ENCODE measurements at regions of chr9 and their contacts with region 1.

Region 1: DNA sequence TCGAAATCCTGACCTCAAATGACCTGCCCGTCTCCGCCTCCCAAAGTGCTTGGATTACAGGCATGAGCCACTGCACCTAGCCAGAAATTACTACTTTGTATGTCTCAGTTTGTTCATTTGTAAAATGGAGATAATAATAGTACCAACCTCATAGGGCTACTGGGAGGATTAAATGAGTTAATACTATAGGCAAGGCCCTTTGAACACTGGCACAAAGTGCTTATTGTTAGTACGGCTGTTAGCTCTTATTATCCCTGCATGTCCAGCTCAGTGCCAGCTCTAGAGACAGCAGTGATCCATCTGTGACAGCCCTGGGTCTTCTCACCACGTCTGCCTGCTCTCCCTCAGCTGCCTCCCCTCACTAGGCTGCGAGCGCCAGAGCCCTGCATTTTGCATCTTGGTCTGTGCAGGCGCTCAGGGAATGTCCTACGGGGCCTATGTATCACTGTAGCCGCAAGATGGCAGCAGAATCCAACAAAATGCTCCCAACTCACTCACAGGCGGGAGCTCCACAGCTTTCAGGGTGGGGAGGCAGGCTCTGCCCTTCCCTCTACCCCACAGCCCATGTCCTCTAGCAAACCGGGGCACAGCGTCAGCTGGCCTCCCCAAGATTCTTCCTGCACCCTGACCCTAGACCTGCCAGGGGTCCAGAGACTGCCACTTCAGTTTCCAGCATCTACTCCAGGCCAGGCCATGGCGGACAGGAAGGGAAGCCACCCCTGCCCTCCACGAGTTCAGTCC is 17.7 kb upstream of the AKNA start:
- DNase-seq: peak; percentile 78 to 90
- ATAC-seq: peak; percentile 87 to 98
- H3K4me3 ChIP-seq: no peak overlapping the region
- H3K27ac ChIP-seq: no peak overlapping the region
- H3K4me1 ChIP-seq: no peaks in the 10 kb centered on the region
- CTCF ChIP-seq: peak; percentile 84
- EP300 ChIP-seq: no peak
- POLR2A ChIP-seq: no peak
- RAD21 ChIP-seq: peak; percentile 93 to 95

Region 2: DNA sequence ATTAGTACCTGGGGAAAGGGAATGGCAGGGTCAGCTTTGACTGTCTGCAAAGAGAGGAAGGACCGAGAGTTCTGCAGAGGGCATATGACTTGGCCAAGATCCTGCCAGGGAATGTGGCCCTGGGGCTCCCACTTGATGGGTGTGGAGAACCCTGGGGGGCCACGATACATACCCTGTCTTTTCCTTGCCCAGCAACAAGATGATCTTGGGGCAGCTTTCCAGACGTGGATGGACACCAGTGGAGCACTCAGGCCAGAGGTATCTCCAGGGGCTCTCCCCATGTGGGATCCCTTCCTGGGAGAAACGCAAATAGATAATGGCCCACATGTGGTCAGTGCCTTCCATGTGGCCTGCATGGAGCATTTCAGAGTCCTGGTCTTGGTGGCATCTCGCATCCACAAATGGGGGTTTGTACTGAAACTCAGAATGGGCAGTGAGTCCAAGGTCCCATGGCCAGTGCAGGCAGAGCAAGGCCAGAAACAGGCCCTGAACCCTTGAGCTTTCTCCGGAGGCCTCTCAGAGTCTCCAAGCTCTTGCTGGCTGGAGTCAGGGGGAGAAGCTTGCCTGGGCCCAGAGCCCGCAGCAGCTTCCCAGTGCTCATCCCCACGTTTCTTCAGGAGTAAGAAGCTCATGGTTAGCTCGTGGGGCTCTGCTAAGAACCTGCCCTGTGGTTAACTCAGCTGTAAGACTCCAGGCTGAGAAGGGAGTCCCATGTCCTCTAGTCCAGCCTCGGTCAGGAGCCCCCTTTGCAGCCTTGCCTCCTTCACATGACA is 100.9 kb before region 1 on chr9:
- CTCF ChIA-PET with region 1: no interaction called
- POLR2A ChIA-PET with region 1: no interaction called
- DNase-seq: no peak
- ATAC-seq: no peak
- H3K4me3 ChIP-seq: no peak overlapping the region
- H3K27ac ChIP-seq: no peak overlapping the region
- H3K4me1 ChIP-seq: no peaks in the 10 kb centered on the region
- CTCF ChIP-seq: no peak
- EP300 ChIP-seq: no peak
- POLR2A ChIP-seq: no peak
- RAD21 ChIP-seq: no peak

Region 3: DNA sequence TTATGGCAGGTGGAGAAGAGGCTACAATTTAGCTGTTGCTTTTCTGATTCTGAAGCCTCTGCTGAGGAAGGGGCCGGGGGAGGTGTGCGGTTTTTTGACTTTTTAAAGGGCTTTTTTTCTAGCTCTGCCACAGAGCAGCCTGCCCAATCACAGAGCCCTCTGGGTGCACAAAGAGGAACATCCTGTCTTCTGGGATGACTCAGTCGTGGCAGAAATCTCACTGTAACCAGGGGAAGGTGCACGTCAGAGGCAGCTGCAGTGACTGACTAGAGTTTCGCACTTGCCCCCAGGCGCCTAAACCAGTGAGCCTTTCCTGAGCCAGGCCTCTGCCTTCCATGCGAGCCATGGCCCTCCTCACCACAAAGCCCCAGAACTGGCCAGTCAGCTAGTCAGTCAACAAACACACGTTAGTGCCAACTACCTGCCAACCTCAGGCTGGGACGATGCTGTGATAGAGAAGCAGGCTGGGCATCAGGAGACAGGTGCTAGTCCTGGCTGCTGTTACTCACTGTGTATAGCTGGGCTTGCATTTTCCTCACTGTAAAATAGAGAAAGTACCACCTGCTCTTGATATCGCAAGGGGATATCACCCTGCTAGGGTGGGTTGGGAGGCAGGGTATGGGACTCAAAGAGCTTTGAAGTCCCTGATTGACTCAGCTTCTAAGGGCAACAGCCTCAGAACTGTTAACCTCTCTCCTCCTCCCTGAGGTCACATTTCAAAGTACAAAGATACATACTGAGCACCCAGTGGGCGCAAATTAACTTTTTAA is 19.9 kb before region 1 on chr9:
- CTCF ChIA-PET with region 1: interaction called, 20 read pairs
- POLR2A ChIA-PET with region 1: no interaction called
- DNase-seq: peak in 1 of 2 experiments; percentile 24
- ATAC-seq: peak; percentile 70 to 73; a peak in 5 of 6 replicates
- H3K4me3 ChIP-seq: no peak overlapping the region
- H3K27ac ChIP-seq: peak overlapping the region; percentile 25 to 56; a peak in 4 of 6 replicates
- H3K4me1 ChIP-seq: peaks cover 9% of the 10 kb centered on the region; the same call in 2 of the 3 replicates
- CTCF ChIP-seq: no peak
- EP300 ChIP-seq: no peak
- POLR2A ChIP-seq: no peak
- RAD21 ChIP-seq: no peak

Region 4: GRCh38 chr9:114452219-114453165 is 47.0 kb after region 1 on chr9:
- CTCF ChIA-PET with region 1: interaction called, 12 read pairs
- POLR2A ChIA-PET with region 1: no interaction called
- DNase-seq: no peak
- ATAC-seq: no peak
- H3K4me3 ChIP-seq: no peak overlapping the region
- H3K27ac ChIP-seq: no peak overlapping the region
- H3K4me1 ChIP-seq: no peaks in the 10 kb centered on the region
- CTCF ChIP-seq: no peak
- EP300 ChIP-seq: no peak
- POLR2A ChIP-seq: no peak
- RAD21 ChIP-seq: no peak

Region 5: GRCh38 chr9:114641967-114642366 is 236.5 kb after region 1 on chr9:
- CTCF ChIA-PET with region 1: interaction called, 11 read pairs
- POLR2A ChIA-PET with region 1: no interaction called
- DNase-seq: no peak
- ATAC-seq: no peak
- H3K4me3 ChIP-seq: no peak overlapping the region
- H3K27ac ChIP-seq: no peak overlapping the region
- H3K4me1 ChIP-seq: no peaks in the 10 kb centered on the region
- CTCF ChIP-seq: no peak
- EP300 ChIP-seq: no peak
- POLR2A ChIP-seq: no peak
- RAD21 ChIP-seq: no peak

Region 6: DNA sequence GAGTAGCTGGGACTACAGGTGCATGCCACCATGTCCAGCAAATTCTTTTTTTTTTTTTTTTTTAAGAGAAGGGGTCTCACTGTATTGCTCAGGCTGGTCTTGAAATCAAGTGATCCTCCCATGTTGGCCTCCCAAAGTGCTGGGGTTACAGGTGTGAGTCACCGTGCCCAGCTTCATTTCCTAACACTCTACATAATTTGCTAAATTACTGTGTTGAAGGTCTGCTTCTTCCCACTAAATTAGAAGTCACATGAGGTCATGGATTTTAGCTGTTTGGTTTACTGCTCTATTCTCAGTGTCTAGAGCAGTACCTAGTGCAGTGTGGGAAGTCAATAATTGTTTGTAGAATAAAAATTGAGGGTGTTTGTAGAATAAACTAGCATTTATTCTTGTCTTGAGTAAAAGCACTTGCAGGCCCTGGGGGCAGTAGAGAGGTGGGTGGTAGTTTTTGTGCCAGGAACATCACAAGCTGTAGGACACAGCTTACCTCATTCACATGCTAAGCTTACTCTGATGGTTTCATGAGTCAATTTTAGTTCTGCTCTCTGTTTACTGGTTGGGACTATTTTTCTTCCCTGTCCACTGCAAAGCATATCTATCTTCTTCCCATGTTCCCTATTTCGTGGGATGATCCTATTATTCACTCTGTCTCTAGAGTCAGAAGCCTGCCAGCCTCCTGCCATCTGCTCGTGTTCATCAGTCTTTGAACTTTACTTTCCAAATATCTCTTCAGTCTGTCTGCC is 269.5 kb after region 1 on chr9:
- CTCF ChIA-PET with region 1: interaction called, 13 read pairs
- POLR2A ChIA-PET with region 1: no interaction called
- DNase-seq: no peak
- ATAC-seq: no peak
- H3K4me3 ChIP-seq: no peak overlapping the region
- H3K27ac ChIP-seq: peak overlapping the region; percentile 82 to 91; a peak in 4 of 6 replicates
- H3K4me1 ChIP-seq: peaks cover 51% of the 10 kb centered on the region
- CTCF ChIP-seq: no peak
- EP300 ChIP-seq: no peak
- POLR2A ChIP-seq: no peak
- RAD21 ChIP-seq: no peak

Region 7: DNA sequence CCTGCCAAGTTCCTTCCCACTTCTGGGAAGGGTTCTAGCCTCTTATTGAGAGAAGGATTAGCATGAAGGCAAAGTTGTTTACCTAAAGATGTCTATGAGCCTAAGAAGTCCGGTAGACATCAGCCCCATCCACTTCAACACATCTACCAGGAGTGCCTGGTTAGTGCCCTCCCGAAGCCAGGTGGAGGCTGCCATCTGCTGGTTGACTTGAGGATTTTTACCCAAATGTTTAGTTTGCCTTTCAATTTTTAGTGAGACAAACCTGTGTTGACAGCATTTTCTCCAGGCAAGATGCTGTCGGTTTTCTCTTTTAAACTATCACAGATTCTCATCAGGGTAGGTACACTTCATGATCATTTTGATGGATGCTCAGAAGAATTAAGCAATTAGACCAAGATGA is 608.5 kb after region 1 on chr9:
- CTCF ChIA-PET with region 1: interaction called, 73 read pairs
- POLR2A ChIA-PET with region 1: no interaction called
- DNase-seq: peak; percentile 72 to 79
- ATAC-seq: peak; percentile 72 to 90
- H3K4me3 ChIP-seq: no peak overlapping the region
- H3K27ac ChIP-seq: no peak overlapping the region
- H3K4me1 ChIP-seq: 0 out of 3 replicates have a peak, but pooled peaks cover under 1% of the 10 kb centered on the region
- CTCF ChIP-seq: peak; percentile 93
- EP300 ChIP-seq: no peak
- POLR2A ChIP-seq: no peak
- RAD21 ChIP-seq: peak; percentile 98